HCT116 (cell line): ENCODE measurements at regions of chr6 and their contacts with region 1.

Region 1: DNA sequence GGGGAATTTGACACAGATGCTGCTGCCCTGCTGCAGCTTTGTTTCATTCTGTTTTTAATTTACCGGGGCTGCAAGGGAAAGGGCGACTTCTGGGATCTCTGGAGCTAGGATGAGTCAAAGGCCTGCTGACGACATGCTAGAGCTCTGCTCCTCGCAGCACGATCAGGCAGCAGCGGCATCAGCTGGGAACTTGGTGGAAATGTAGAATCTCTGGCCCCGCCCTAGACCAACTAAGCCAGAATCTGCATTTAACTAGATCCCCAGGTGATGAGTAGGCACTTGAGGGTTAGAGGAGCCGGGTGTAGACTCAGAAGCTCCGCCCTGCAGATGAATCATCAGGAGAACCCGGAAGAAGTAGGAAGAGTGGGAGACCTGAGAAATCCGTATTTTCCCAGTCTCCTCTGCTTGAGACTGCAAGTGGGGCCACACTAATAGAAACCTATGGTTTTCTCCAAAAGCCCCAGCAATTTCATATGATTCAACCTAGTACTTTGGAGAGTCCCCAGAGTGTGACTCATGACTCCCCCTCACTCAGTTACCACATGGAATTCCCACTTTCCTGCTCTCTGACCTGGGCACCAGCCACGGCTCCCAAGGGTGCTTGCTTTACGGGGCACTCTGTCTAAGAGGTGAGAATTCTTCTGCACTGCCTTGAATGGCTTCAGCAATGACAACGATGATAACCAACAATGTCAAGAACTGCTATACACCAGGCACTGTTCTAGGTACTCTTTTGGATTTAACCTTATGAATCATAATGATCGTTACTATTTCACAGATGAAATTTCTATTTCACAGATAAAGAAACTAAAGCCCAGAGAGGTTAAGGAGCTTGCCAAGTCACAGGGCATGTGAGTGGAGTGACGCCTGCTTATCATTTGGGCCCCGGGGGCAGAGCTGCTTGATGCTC is 18.1 kb downstream of the TUBB2B start:
- DNase-seq: peak; percentile 96
- ATAC-seq: peak; percentile 98
- H3K4me3 ChIP-seq: peak overlapping the region; percentile 33 to 49
- H3K27ac ChIP-seq: peak overlapping the region; percentile 61
- H3K4me1 ChIP-seq: peaks cover 12 to 34% of the 10 kb centered on the region in 2 experiments
- H3K27me3 ChIP-seq: no peaks in the 10 kb centered on the region
- CTCF ChIP-seq: peak in 2 of 3 experiments; percentile 20 to 55; a peak in 1 of 6 replicates
- POLR2A ChIP-seq: no peak
- RAD21 ChIP-seq: peak; percentile 81

Region 2: DNA sequence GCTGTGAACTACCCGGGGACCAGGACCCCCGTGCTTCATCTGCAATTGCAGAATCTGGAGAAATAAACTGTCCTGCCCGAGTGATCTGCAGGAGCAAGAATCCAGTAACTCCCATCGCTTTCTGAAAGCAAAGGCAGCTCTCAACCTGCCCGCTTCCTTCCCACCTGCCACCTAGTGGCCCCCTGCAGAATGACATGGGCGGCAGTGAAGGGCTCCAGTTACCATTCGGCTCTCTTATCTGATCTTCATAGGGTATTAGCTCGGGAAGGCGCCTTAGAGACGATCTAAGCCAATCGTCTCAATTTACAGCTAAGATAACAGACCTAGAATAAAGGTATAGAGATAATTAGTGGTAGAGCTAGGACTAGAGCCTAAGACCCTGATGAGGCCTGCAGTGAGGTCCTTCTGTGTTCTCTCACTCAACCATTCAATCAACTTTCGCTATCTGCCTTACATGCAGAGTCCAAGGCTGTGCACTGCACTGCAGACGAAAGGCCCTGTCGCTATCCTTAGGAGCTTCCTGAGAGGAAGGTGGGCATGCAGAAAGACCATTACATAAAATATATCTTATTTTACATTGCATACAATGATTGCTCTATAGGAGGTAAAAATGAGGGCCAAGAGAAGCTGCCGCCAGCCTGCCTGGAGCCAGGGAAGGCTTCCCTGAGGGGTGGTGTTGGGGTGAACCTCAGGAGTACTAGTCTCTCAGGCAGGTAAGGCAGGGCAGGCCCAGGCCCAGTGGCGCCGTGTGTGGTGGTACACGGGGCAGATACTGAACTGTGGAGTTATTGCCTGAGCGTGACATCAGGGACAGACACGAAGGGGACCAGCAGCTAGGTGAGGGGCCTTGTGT is 42.3 kb after region 1 on chr6:
- CTCF ChIA-PET with region 1: interaction called, 7 read pairs
- POLR2A ChIA-PET with region 1: no interaction called
- RAD21 ChIA-PET with region 1: interaction called in 1 of 2 experiments, 4 read pairs
- intact Hi-C with region 1: loop called (anchors 1 kb)
- DNase-seq: peak; percentile 66
- ATAC-seq: peak; percentile 87
- H3K4me3 ChIP-seq: peak overlapping the region; percentile 12 to 18
- H3K27ac ChIP-seq: no peak overlapping the region
- H3K4me1 ChIP-seq: peaks cover 0 to 33% of the 10 kb centered on the region in 2 experiments; a peak in 2 of 4 replicates
- H3K27me3 ChIP-seq: no peaks in the 10 kb centered on the region
- CTCF ChIP-seq: peak; percentile 94 to 97 (median 96)
- POLR2A ChIP-seq: no peak
- RAD21 ChIP-seq: peak; percentile 88

Region 3: GRCh38 chr6:3414327-3415075 is 205.1 kb after region 1 on chr6:
- CTCF ChIA-PET with region 1: no interaction called
- POLR2A ChIA-PET with region 1: no interaction called
- RAD21 ChIA-PET with region 1: no interaction called
- intact Hi-C with region 1: no loop called
- DNase-seq: no peak
- ATAC-seq: no peak
- H3K4me3 ChIP-seq: no peak overlapping the region
- H3K27ac ChIP-seq: no peak overlapping the region
- H3K4me1 ChIP-seq: peaks cover 2 to 12% of the 10 kb centered on the region in 2 experiments; a peak in 1 of 4 replicates
- H3K27me3 ChIP-seq: no peaks in the 10 kb centered on the region
- CTCF ChIP-seq: no peak
- POLR2A ChIP-seq: no peak
- RAD21 ChIP-seq: no peak